Panc1 (cell line): ENCODE measurements at regions of chr20 and their contacts with region 1.

Region 1: GRCh38 chr20:31560094-31560899 is 44.8 kb upstream of the ID1 start:
- DNase-seq: peak; percentile 84
- ATAC-seq: peak; percentile 56
- H3K4me3 ChIP-seq: no peak overlapping the region
- H3K27ac ChIP-seq: peak overlapping the region; percentile 88
- H3K4me1 ChIP-seq: peaks cover 37% of the 10 kb centered on the region
- H3K27me3 ChIP-seq: no peaks in the 10 kb centered on the region
- CTCF ChIP-seq: peak; percentile 100

Region 2: DNA sequence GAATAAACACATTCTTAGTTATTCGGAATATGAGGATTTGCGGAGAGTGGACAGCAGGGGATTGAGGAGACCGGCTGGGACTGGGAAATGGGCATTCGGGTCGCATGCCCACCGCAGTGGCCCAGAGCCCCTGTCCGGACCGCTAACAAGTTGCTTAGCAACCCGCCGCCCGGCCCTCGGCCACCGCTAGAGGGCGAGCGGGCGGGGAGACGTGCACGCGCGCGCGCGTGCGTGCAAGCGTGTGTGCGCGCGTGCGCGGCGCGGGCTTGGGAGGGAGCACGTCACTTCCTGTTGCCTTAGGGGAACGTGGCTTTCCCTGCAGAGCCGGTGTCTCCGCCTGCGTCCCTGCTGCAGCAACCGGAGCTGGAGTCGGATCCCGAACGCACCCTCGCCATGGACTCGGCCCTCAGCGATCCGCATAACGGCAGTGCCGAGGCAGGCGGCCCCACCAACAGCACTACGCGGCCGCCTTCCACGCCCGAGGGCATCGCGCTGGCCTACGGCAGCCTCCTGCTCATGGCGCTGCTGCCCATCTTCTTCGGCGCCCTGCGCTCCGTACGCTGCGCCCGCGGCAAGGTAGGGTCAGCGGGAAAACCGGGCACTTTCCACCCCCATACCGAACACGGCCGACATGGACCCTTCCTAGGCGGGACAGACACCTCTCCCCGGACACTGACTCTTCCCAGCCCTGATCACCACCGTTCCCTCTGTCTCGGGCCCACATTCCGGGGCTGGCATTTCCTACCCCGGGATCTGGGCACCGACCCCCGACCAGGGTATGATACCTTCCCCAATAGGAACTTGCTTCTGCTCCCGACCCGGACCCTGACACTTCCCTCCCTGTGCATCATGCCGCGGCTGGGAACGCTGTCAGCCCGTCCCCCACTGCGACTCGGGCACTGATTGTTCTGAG is 45.9 kb before region 1 on chr20 and contains the start of gene HM13:
- CTCF ChIA-PET with region 1: interaction called, 12 read pairs
- POLR2A ChIA-PET with region 1: interaction called, 10 read pairs
- in situ Hi-C with region 1: no loop called
- intact Hi-C with region 1: no loop called
- DNase-seq: peak; percentile 89
- ATAC-seq: peak; percentile 94
- H3K4me3 ChIP-seq: peak within 1 kb of the TSS; percentile 70 to 78
- H3K27ac ChIP-seq: peak within 1 kb of the TSS; percentile 90
- H3K4me1 ChIP-seq: peaks cover 27% of the 10 kb centered on the region
- H3K27me3 ChIP-seq: no peaks in the 10 kb centered on the region
- CTCF ChIP-seq: peak; percentile 100
- total RNA-seq, gene HM13: 337 TPM

Region 3: DNA sequence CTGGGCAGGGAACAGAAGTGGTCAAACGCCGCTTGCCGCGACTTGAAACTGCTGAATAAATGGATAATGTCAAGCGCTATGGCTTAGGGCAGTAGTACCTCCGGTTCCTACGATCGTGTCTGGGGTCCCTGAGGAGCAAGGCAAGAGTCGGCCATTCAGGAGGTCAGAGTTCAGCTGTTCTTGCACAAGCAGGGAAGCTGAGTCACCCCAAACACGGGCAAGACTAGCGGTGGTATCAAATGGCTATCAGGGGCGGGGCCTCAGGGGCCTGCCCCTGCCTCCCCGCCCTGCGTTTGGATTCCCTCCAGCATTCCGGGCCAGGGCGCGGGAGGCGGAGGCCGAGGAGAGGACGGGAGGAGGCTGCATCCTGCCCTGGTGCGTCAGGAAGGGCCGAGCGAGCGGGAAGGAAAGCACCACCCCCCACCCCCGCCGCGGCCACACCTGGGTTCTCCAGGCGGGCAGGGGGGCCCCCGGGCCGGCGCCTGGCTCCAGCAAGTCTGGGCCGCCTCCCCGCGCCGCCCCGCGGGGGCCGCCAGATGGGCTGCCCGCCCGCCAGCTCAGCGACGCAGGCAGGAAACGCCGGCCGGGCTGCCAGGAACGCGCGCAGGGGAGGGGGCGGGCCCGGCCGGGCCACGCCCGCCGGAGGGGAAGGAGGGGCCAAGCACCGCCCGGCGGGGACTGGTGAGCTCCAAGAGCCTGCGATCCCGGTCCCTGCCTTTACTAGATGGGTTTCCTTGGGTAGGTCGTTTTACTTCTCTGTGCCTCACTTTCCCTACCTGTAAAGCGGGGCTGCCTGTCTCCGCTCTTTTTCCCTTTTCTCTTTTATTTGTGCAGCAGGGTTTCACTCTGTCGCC is 12.6 kb after region 1 on chr20:
- CTCF ChIA-PET with region 1: interaction called, 48 read pairs
- POLR2A ChIA-PET with region 1: interaction called, 6 read pairs
- in situ Hi-C with region 1: no loop called
- intact Hi-C with region 1: no loop called
- DNase-seq: peak; percentile 98
- ATAC-seq: peak; percentile 86
- H3K4me3 ChIP-seq: peak overlapping the region; percentile 54 to 75
- H3K27ac ChIP-seq: peak overlapping the region; percentile 99
- H3K4me1 ChIP-seq: peaks cover 56% of the 10 kb centered on the region
- H3K27me3 ChIP-seq: no peaks in the 10 kb centered on the region
- CTCF ChIP-seq: no peak

Region 4: DNA sequence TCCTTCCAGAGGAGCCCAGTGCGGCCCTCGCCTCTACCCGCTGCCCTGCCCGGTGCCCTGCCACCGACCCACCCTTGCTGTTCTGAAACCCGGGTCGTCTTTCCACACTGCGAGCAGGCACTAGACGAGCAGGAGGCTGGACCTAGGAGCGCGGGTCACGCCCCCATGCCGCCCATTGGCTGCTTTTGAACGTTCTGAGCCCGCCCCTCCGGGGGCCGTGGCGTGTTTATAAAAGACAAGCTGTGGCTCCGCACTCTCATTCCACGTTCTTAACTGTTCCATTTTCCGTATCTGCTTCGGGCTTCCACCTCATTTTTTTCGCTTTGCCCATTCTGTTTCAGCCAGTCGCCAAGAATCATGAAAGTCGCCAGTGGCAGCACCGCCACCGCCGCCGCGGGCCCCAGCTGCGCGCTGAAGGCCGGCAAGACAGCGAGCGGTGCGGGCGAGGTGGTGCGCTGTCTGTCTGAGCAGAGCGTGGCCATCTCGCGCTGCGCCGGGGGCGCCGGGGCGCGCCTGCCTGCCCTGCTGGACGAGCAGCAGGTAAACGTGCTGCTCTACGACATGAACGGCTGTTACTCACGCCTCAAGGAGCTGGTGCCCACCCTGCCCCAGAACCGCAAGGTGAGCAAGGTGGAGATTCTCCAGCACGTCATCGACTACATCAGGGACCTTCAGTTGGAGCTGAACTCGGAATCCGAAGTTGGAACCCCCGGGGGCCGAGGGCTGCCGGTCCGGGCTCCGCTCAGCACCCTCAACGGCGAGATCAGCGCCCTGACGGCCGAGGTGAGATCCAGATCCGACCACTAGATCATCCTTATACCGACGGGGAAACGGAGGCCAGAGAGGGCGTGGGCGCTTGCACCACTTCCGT is 45.0 kb after region 1 on chr20 and contains the start of gene ID1:
- CTCF ChIA-PET with region 1: interaction called, 298 read pairs
- POLR2A ChIA-PET with region 1: interaction called, 9 read pairs
- in situ Hi-C with region 1: no loop called
- intact Hi-C with region 1: no loop called
- DNase-seq: peak; percentile 95
- ATAC-seq: peak; percentile 67
- H3K4me3 ChIP-seq: peak within 1 kb of the TSS; percentile 73 to 88
- H3K27ac ChIP-seq: peak within 1 kb of the TSS; percentile 100
- H3K4me1 ChIP-seq: peaks cover 58% of the 10 kb centered on the region
- H3K27me3 ChIP-seq: no peaks in the 10 kb centered on the region
- CTCF ChIP-seq: no peak
- total RNA-seq, gene ID1: 152 TPM

Region 5: GRCh38 chr20:31661625-31662371 is 101.5 kb after region 1 on chr20:
- CTCF ChIA-PET with region 1: interaction called, 14 read pairs
- POLR2A ChIA-PET with region 1: no interaction called
- in situ Hi-C with region 1: no loop called
- intact Hi-C with region 1: no loop called
- DNase-seq: peak; percentile 74
- ATAC-seq: peak; percentile 81
- H3K4me3 ChIP-seq: peak overlapping the region; percentile 27 to 64
- H3K27ac ChIP-seq: peak overlapping the region; percentile 78
- H3K4me1 ChIP-seq: peaks cover 40% of the 10 kb centered on the region
- H3K27me3 ChIP-seq: no peaks in the 10 kb centered on the region
- CTCF ChIP-seq: peak; percentile 98

Region 6: DNA sequence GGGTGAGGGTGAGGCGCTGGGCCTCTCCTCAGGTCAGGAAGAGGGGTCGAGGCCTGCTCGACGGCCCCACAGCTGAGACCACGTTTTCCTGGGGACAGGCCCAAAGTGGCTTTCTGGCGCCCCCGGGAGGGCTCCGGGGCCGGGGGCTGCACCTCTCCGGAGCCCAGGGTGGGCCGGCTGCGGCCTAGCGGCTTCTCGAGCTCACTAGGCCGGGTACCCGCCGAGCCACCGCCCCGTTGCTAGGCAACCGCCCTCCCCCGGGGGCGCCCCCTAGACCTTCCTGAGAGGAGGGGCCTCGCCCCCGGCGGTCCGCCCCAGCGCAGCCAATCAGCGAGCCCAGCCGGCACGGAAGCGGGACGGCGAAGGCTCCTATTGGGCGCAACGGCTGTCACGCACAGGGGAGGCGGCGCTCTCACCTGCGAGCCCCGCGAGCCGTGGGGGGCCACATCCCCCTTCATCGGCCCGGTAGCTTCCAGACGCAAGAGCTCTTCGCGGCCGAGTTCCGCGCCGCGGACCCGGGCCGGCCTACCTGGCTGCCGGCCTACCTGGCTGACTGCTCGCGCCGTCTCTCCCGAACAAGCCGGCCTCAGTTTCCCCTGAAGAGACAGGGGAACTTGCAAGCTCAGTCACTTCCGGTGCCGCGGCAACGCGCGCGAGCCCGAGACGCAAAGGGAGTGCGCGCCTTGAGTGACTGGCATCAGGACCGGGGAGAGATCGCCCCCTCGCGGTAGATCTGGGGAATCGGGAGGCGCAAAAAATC is 163.2 kb after region 1 on chr20:
- CTCF ChIA-PET with region 1: interaction called, 11 read pairs
- POLR2A ChIA-PET with region 1: interaction called, 3 read pairs
- in situ Hi-C with region 1: no loop called
- intact Hi-C with region 1: loop called (anchors 5 kb)
- DNase-seq: peak; percentile 99
- ATAC-seq: peak; percentile 92
- H3K4me3 ChIP-seq: peak overlapping the region; percentile 60 to 85
- H3K27ac ChIP-seq: peak overlapping the region; percentile 99
- H3K4me1 ChIP-seq: peaks cover 33% of the 10 kb centered on the region
- H3K27me3 ChIP-seq: no peaks in the 10 kb centered on the region
- CTCF ChIP-seq: peak; percentile 100